ENCODE measurements at regions of chr4 and their contacts with region 1.

Region 1: GRCh38 chr4:39134683-39135319 is 47.5 kb upstream of the WDR19 start:
- DNase-seq: peak; percentile 40
- H3K4me3 ChIP-seq: peak overlapping the region; percentile 6
- H3K27ac ChIP-seq: peak overlapping the region; percentile 3
- H3K4me1 ChIP-seq: peaks cover 20% of the 10 kb centered on the region
- CTCF ChIP-seq: no peak

Region 2: DNA sequence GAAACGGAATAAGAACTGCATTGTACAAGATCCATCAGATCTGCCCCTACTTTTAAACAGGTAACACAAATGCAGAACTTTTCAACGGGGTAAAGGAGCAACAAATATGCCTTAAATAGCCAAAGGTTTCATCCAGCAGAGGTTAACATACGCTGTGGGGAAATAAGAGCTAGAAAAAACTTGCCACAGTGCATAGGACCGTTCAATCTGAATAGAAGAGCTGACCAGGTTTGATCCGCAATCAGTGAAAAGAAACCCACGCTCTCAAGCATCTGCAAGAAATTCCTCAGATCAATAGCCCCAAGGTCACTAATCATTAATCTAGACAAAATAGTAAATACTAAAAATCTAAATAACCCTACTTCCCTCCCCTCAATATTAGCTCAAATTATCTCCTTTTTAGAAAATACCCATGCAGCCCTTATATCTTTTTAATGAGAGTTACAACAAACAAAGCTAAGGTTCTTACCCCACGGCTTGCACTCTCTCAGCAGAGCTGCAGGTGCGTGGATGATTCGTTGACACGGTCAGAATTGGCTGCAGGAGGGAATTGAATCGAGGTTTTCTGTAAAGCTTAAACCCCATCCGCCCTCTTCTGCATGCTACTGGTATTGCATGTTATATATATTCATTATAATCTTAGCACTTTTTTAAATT is 352.2 kb before region 1 on chr4 and contains the start of gene TLR10:
- CTCF ChIA-PET with region 1: no interaction called
- POLR2A ChIA-PET with region 1: no interaction called
- intact Hi-C with region 1: loop called (anchors 10 kb)
- DNase-seq: peak; percentile 95
- H3K4me3 ChIP-seq: peak within 1 kb of the TSS; percentile 75
- H3K27ac ChIP-seq: peak within 1 kb of the TSS; percentile 90
- H3K4me1 ChIP-seq: peaks cover 37% of the 10 kb centered on the region
- CTCF ChIP-seq: peak; percentile 84
- total RNA-seq, gene TLR10: 34.5 and 39.8 TPM in 2 replicates

Region 3: GRCh38 chr4:38902695-38903094 is 232.1 kb before region 1 on chr4:
- CTCF ChIA-PET with region 1: interaction called, 24 read pairs
- POLR2A ChIA-PET with region 1: interaction called, 15 read pairs
- intact Hi-C with region 1: loop called (anchors 1 kb)
- DNase-seq: peak; percentile 64
- H3K4me3 ChIP-seq: no peak overlapping the region
- H3K27ac ChIP-seq: no peak overlapping the region
- H3K4me1 ChIP-seq: no peaks in the 10 kb centered on the region
- CTCF ChIP-seq: peak; percentile 85

Region 4: DNA sequence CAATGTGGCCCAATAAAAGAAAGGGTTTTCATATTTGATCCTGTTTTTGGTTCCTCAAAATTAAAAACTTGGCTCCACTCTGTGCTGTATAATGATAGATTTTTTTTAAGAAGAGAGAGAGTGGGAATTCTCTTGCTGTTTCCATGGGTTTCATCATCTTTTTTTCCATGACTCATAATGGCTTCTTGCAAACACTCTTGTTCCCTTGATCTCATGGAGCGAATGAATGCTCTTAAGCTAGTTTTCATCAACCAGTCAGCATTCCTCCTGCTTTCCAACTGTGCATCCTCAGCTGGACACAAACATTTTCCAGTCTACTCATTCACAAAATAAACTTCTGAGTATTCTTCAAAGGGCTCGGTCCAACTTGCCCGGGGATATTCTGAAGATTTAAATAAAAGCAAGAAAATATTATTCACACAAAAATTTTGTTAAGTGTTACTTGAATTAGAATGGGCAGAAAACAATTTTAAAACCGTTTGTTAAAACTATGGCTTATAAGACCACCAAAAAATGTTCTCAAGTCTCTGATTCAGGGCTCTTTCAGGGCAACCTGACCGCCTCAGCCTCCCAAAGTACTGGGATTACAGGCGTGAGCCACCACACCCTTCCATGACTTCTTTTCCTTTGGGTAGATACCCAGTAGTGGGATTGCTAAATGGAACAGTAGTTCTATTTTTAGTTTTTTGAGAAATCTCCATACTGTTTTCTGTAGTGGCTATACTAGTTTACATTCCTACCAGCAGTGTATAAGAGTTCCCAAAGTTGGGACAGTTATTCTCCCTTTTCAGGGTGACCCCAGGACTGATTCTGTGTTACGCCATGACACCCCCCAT is 167.3 kb before region 1 on chr4:
- CTCF ChIA-PET with region 1: no interaction called
- POLR2A ChIA-PET with region 1: no interaction called
- intact Hi-C with region 1: no loop called
- DNase-seq: no peak
- H3K4me3 ChIP-seq: no peak overlapping the region
- H3K27ac ChIP-seq: no peak overlapping the region
- H3K4me1 ChIP-seq: no peaks in the 10 kb centered on the region
- CTCF ChIP-seq: no peak

Region 5: GRCh38 chr4:39410415-39410814 is 275.6 kb after region 1 on chr4:
- CTCF ChIA-PET with region 1: no interaction called
- POLR2A ChIA-PET with region 1: no interaction called
- intact Hi-C with region 1: loop called (anchors 5 kb)
- DNase-seq: peak; percentile 40
- H3K4me3 ChIP-seq: no peak overlapping the region
- H3K27ac ChIP-seq: no peak overlapping the region
- H3K4me1 ChIP-seq: peaks cover 6% of the 10 kb centered on the region
- CTCF ChIP-seq: peak; percentile 74